ENCODE measurements at regions of chr4 and their contacts with region 1.

Region 1: DNA sequence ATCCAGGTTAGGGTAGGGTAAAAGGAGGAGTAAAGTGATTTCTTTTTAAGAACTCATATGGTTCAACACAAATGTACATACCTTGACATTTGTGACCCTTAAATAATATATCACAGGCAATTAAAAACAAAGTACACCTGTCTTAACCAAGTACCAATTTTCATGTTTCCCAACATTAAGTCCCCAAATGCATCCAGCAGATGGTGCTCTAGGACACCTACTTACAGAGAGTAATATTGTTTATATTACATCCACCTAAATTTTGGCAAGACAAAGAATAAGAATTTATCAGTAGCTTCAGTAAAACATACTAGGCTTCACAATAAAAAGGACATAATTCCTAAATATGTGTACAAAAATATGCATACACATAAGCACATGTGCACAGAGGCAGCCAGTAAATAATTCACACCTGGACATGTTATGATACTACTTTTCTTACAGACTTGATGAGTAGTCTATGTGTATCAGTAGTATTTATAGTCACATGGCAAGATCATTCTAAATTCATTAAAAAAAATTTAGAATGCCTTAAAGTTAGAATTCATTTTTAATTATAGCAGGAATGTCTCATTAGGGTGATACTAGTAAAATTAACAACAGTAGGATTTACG is 219.7 kb downstream of the DCLK2 start:
- DNase-seq: peak in 2 of 4 donors; percentile 29 to 65
- ATAC-seq: peak; percentile 71
- H3K4me3 ChIP-seq: no peak overlapping the region
- H3K27ac ChIP-seq: no peak overlapping the region
- H3K4me1 ChIP-seq: peaks cover 0 to 6% of the 10 kb centered on the region in 2 donors
- H3K27me3 ChIP-seq: no peaks in the 10 kb centered on the region
- CTCF ChIP-seq: peak; percentile 45 to 56

Region 2: GRCh38 chr4:150867148-150867547 is 569.2 kb after region 1 on chr4:
- intact Hi-C with region 1: loop called in 1 of 2 experiments (anchors 10 kb)
- DNase-seq: peak in 2 of 4 donors; percentile 59 to 82
- ATAC-seq: peak; percentile 92
- H3K4me3 ChIP-seq: no peak overlapping the region
- H3K27ac ChIP-seq: no peak overlapping the region
- H3K4me1 ChIP-seq: no peaks in the 10 kb centered on the region
- H3K27me3 ChIP-seq: no peaks in the 10 kb centered on the region
- CTCF ChIP-seq: peak; percentile 36 to 49